Uterus (tissue), 4 donors: ENCODE measurements at regions of chr6 and their contacts with region 1.

Region 1: DNA sequence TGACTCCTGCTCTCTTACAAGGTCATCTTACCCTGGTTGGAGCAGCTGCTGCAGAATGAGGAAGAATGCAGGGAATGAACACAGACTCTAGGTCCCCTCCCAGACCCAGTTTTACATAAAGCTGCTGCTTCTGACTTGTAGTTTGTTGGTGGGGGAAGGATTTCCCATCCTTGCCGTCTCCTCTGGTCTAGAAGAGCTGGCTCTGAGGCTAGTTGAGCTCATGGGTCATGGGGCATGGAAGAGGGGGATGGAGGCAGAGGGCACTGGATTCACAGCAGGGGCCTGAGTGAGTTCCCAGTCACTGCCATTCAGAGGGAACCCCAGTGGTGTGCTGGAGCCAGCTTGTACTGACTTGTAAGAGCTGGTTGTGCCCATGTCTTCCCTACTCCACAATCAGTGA is 9.2 kb upstream of the GUCA1A start:
- DNase-seq: no peak
- H3K4me3 ChIP-seq: no peak overlapping the region
- H3K27ac ChIP-seq: no peak overlapping the region
- H3K4me1 ChIP-seq: no peaks in the 10 kb centered on the region
- H3K27me3 ChIP-seq: no peaks in the 10 kb centered on the region
- CTCF ChIP-seq: no peak
- POLR2A ChIP-seq: no peak

Region 2: GRCh38 chr6:42075159-42075838 is 88.7 kb before region 1 on chr6:
- intact Hi-C with region 1: loop called (anchors 5 kb)
- DNase-seq: peak; percentile 75 to 77
- H3K4me3 ChIP-seq: no peak overlapping the region
- H3K27ac ChIP-seq: no peak overlapping the region
- H3K4me1 ChIP-seq: no peaks in the 10 kb centered on the region
- H3K27me3 ChIP-seq: no peaks in the 10 kb centered on the region
- CTCF ChIP-seq: peak; percentile 73 to 83 (median 80)
- POLR2A ChIP-seq: no peak